ENCODE measurements at regions of chr18 and their contacts with region 1.

Region 1: DNA sequence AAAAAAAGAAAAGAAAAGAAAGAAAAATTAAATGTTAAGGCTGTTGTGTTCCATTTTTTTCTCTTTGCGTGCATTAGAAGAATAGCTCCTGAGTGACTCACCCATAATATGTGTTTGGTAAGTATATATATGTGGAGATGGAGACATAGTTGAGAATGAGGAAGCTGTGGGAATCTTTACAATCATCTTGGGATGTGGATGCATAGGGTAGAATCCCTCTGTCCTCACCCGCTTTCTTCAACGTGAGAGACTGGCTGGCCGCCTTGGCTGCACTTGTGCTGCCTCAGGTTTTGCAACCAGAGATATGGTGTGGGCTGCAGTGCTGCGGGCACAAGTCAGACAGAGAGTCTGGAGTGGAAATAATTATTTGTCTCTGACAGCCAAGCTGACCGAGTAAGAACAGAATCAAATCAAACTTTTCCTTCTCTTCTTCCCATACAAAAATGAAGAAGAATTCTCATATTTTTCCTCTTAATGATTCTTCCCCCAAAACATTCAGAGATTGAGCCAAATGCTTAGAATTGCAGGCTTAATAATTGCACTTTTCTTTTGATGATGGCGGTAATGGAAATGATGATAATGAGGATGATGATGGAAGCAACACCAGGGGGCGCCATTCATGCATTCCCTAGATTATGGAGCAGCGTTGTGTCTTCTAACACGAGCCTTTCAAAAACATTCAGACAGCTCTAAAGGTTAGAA is 48.5 kb downstream of the SERPINB7 start:
- DNase-seq: no peak
- ATAC-seq: no peak
- H3K4me3 ChIP-seq: no peak overlapping the region
- H3K4me3 Mint-ChIP-seq: no peak overlapping the region
- H3K27ac ChIP-seq: no peak overlapping the region
- H3K27ac Mint-ChIP-seq: no peak overlapping the region
- H3K4me1 ChIP-seq: no peaks in the 10 kb centered on the region
- H3K4me1 Mint-ChIP-seq: no peaks in the 10 kb centered on the region
- H3K27me3 ChIP-seq: no peaks in the 10 kb centered on the region
- H3K27me3 Mint-ChIP-seq: peaks cover 4 to 27% (median 17%) of the 10 kb centered on the region in 5 donors

Region 2: GRCh38 chr18:63454497-63454896 is 369.2 kb before region 1 on chr18:
- CTCF ChIA-PET with region 1: no interaction called
- POLR2A ChIA-PET with region 1: no interaction called
- intact Hi-C with region 1: no loop called
- DNase-seq: no peak
- ATAC-seq: no peak
- H3K4me3 ChIP-seq: no peak overlapping the region
- H3K4me3 Mint-ChIP-seq: no peak overlapping the region
- H3K27ac ChIP-seq: no peak overlapping the region
- H3K27ac Mint-ChIP-seq: no peak overlapping the region
- H3K4me1 ChIP-seq: no peaks in the 10 kb centered on the region
- H3K4me1 Mint-ChIP-seq: no peaks in the 10 kb centered on the region
- H3K27me3 ChIP-seq: no peaks in the 10 kb centered on the region
- H3K27me3 Mint-ChIP-seq: peaks cover 0 to 13% (median 0%) of the 10 kb centered on the region in 5 donors

Region 3: DNA sequence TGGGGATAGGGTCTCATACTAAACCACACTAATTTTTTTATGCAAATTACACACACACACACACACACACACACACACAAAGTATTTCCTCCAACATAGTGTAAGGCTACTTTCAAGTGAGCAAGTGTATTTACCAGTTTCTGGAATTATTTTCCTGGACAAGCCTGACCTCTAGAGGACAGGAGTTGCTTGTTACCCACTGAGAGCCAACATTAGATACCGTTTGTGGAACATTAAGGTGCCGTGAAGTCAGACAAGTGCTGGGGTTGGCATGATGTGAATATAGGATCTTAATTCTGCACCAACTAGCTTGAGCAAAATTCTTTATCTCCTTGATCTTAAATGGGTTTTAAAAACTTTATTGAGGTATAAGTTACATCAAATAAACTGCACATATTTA is 24.5 kb after region 1 on chr18:
- CTCF ChIA-PET with region 1: no interaction called
- POLR2A ChIA-PET with region 1: no interaction called
- intact Hi-C with region 1: loop called in 1 of 2 experiments (anchors 2 kb)
- DNase-seq: no peak
- ATAC-seq: peak; percentile 60
- H3K4me3 ChIP-seq: no peak overlapping the region
- H3K4me3 Mint-ChIP-seq: no peak overlapping the region
- H3K27ac ChIP-seq: no peak overlapping the region
- H3K27ac Mint-ChIP-seq: no peak overlapping the region
- H3K4me1 ChIP-seq: no peaks in the 10 kb centered on the region
- H3K4me1 Mint-ChIP-seq: peaks cover 0 to 1% (median 0%) of the 10 kb centered on the region in 7 donors
- H3K27me3 ChIP-seq: no peaks in the 10 kb centered on the region
- H3K27me3 Mint-ChIP-seq: peaks cover 0 to 30% (median 5%) of the 10 kb centered on the region in 5 donors

Region 4: DNA sequence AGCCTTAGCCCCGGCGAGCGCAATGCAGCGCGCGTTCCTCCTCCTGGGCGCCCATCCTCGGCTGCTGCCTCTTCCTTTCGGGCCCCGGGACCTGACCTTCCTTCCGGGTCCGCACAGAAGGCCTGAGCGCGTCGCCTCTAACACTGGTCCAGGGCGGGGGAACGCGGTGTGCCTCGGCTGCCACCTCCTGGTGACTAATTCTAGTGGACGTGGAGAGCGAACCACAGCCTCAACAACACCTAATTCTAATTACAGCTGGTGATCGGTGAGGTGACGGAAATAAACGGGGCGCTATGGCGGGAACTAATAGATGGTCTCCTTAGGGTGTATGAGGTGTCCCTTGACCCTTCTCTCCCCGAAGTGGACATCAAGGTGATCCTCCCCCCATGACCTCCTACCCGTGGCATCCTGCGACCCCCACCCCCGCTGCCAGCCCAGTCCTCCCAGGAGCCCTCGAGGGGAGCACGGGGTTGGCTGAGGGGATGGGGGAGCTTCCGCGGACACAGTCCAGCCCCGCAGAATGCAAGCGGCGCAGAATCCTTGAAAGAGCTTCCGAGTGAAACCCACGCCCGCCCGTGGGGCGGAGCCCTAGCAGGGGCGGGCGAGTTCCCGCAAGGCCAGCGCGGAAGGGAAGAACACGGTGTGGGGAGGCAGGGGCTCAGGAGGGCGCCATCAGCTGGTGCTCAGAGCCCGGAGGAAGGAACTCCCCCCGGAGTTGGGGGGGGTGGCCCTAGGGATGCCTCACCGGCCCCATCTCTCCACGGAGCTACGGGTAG is 112.7 kb after region 1 on chr18:
- CTCF ChIA-PET with region 1: no interaction called
- POLR2A ChIA-PET with region 1: no interaction called
- intact Hi-C with region 1: loop called (anchors 1 kb)
- DNase-seq: peak in 8 of 9 donors; percentile 6 to 69 (median 19)
- ATAC-seq: peak; percentile 93
- H3K4me3 ChIP-seq: peak overlapping the region; percentile 58
- H3K4me3 Mint-ChIP-seq: peak overlapping the region in 8 of 10 donors; percentile 39 to 86 (median 64)
- H3K27ac ChIP-seq: no peak overlapping the region
- H3K27ac Mint-ChIP-seq: peak overlapping the region in 1 of 9 donors; percentile 54
- H3K4me1 ChIP-seq: peaks cover 0 to 5% of the 10 kb centered on the region in 2 donors
- H3K4me1 Mint-ChIP-seq: peaks cover 0 to 4% (median 3%) of the 10 kb centered on the region in 7 donors
- H3K27me3 ChIP-seq: peaks cover 0 to 8% of the 10 kb centered on the region in 2 donors
- H3K27me3 Mint-ChIP-seq: peaks cover 7 to 38% (median 24%) of the 10 kb centered on the region in 5 donors

Measured in naive thymus-derived CD4-positive, alpha-beta T cell (primary cell).